Heart right ventricle (tissue), 16 donors: ENCODE measurements at regions of chr13 and their contacts with region 1.

Region 1: DNA sequence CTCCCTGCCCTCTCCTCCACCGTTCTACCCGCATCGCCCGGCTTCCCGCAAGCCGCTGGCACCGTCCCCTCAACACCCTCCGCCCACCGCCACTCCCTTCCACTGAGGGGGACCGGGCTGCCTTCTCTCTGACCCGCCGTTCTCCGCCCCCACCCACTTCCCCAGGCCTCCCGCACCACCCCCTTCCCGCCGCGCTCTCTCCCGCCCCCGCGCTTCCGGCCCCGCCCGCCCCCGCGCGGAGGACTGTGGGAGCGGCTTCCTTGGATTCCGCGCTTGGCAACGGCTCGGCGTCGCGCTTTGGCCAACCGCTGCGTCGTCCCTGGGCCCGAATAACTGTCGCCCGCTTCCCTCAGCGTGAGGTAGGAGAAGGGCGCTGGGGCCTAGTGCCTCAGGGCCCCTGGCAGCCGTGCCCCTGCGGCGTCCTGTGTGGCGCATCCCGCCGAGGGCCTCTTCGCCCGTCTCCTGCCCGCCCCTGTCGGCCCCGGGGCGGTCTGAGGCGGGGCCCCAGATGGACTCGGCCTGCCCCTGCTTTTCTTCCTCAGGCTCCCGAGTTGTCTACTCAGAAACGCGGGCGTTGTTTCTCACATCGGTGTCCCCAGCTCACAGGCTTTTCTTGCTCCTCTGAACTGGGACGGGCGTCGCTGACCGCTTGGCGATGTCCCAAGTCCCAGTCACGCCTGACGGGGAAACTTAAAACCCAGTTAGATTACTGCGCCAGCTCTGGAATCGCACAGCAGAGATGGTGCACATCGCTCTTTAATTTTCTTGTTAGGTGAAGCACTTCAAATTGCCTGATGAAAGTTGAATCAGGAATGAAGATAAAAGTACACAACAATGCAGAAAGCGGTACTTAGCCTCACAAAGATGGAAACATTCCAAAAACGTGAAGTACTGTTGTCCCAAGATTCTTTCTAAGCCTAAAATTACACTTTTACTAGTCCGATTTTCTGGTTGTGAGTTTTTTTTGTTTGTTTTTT is at the start of gene IFT88:
- DNase-seq: peak; percentile 91 to 92
- ATAC-seq: peak; percentile 98 to 99 (median 98)
- H3K4me3 ChIP-seq: peak within 1 kb of the TSS; percentile 19 to 99 (median 78)
- H3K27ac ChIP-seq: peak within 1 kb of the TSS; percentile 76 to 99 (median 94)
- H3K4me1 ChIP-seq: peaks cover 0 to 17% (median 9%) of the 10 kb centered on the region in 9 donors
- H3K27me3 ChIP-seq: no peaks in the 10 kb centered on the region
- CTCF ChIP-seq: peak in 1 of 9 donors; percentile 10
- total RNA-seq, gene IFT88: 6.4 to 13.6 (median 7.6) TPM

Region 2: GRCh38 chr13:20505405-20506366 is 61.5 kb before region 1 on chr13:
- intact Hi-C with region 1: loop called in 2 of 10 experiments (anchors 10 kb)
- DNase-seq: no peak
- ATAC-seq: peak in 4 of 8 donors; percentile 25 to 70 (median 56)
- H3K4me3 ChIP-seq: no peak overlapping the region
- H3K27ac ChIP-seq: peak overlapping the region in 5 of 10 donors; percentile 7 to 54 (median 12)
- H3K4me1 ChIP-seq: peaks cover 0 to 26% (median 3%) of the 10 kb centered on the region in 9 donors
- H3K27me3 ChIP-seq: no peaks in the 10 kb centered on the region
- CTCF ChIP-seq: no peak

Region 3: GRCh38 chr13:20512042-20512683 is 55.0 kb before region 1 on chr13:
- intact Hi-C with region 1: loop called in 2 of 10 experiments (anchors 10 kb)
- DNase-seq: no peak
- ATAC-seq: peak in 2 of 8 donors; percentile 64 to 69
- H3K4me3 ChIP-seq: no peak overlapping the region
- H3K27ac ChIP-seq: no peak overlapping the region
- H3K4me1 ChIP-seq: peaks cover 0 to 11% (median 0%) of the 10 kb centered on the region in 9 donors
- H3K27me3 ChIP-seq: no peaks in the 10 kb centered on the region
- CTCF ChIP-seq: no peak

Region 4: DNA sequence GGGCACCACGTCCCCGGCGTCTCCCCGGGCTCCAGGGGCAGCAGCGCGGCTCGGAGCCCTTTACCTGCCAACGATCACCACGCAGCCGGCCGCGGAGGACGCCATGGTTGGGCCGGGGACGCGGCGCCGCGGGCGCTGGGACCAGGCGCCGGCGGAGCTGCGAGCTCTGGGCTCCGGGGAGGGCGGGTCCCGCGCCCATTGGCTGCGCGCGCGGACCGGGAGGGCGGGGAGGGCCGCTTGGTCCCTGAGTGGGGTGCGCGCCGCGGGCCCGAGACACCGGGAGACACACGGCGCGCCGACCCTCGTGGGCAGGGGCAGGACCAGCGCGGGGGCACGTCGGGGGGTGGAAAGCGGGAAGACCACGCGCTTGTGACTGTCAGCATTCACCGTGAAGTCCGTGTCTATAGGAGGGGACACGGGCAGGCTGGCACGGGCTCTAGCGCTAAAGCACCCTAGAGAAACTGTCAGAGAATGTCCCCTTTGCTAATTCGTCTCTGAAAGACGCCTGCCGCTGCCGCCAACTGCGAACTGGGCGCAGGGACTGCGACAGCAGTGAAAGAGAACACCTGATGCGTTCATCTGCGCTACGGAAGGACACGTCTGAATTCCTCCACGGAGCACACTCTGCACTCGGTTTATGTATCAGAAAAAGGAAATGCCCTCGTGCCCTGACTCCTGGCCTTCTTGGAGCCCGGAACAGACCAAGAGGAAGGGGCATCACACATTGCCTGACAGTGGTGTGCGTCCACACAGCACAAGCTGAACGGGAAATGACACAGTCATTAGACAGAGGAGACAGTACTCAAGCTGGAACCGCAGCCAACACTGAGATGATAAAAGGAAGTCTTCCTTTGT is 41.3 kb before region 1 on chr13 and contains the start of gene CRYL1:
- intact Hi-C with region 1: loop called in 6 of 10 experiments (anchors 2 to 5 kb)
- DNase-seq: peak; percentile 73 to 86
- ATAC-seq: peak; percentile 96 to 98 (median 98)
- H3K4me3 ChIP-seq: peak within 1 kb of the TSS; percentile 55 to 99 (median 90)
- H3K27ac ChIP-seq: peak within 1 kb of the TSS; percentile 26 to 96 (median 88)
- H3K4me1 ChIP-seq: peaks cover 0 to 26% (median 12%) of the 10 kb centered on the region in 9 donors
- H3K27me3 ChIP-seq: peaks cover 0 to under 1% (median 0%) of the 10 kb centered on the region in 7 donors
- CTCF ChIP-seq: no peak
- total RNA-seq, gene CRYL1: 21.3 to 27.3 (median 23.7) TPM